ENCODE measurements at regions of chr7 and their contacts with region 1.

Region 1: DNA sequence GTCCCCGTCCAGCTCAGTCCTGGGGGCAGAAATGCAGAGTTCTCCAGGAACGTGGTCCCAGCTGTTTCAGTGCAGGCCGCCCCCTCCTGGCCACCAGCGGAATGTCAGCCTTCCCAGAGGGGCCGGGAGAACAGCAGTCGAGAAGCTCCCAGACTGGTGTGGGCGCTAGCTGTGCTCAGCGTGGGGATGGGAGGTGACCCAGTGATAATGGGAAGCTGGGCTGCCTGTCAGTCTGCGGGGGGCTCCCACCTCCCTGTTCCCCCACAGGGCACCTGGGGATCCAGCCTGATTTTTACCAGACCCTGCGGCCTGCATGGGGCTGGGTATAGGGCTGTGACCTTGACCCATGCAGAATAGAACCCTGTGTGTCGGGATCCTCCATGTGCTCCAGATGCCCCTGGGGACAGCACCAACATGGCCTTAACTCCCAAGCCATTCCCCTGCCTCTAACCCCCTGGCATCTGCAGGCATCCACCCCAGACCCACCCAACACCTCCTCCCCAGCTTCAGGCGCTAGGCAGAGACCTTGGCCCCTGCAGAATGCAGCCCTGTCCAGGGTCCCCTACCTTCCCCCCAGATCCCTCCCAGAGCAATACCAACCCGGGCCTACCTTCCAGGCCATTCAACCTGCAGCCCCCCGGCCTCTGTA is 946 bp upstream of the ELN start:
- DNase-seq: peak; percentile 83
- H3K4me3 ChIP-seq: no peak overlapping the region
- H3K27ac ChIP-seq: peak overlapping the region; percentile 37
- H3K4me1 ChIP-seq: no peaks in the 10 kb centered on the region
- H3K27me3 ChIP-seq: no peaks in the 10 kb centered on the region
- CTCF ChIP-seq: peak; percentile 95

Region 2: DNA sequence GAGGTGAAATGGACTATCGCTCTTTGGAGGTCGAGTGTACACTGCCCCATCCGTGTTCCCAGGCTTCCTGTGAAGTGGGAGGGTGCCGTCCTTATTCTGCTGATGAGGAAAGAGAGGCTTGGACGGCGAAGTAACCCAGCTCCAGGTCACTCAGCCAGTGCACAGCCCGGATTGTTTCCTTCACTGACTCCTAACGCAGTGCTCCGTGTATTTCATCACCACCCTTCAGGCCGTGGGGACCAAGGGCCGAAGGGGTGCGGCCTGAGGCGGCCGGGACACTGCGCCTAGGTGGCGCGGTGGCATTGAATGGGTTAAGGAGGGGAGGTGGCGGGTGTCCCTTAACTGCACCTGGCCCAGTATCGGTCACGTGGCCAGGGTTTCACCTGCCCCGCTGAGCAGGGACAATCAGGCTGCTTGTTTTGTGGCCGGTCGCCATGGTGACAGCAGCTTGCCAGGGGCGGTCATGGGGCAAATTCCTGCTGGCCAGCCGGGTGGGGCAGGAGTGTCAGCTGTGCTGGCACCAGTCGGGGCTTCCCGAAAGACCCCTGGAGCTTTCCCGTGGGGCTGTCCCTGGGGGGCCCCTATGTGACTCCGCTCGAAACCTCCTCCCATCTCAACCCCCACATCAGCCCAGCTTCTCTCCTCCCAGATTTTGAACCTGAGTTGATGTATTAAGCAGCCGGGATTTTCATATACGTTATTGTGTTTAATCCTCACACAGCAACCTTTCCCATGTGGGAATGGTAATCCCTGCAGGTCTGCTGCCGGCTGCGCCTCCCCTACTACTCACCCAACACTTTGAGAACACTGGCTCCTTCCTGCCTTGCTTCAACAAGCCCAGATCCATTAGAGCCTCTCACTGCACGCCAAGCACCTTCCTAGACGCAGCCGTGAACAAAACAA is 284.1 kb before region 1 on chr7:
- intact Hi-C with region 1: no loop called
- DNase-seq: peak; percentile 99
- H3K4me3 ChIP-seq: no peak overlapping the region
- H3K27ac ChIP-seq: peak overlapping the region; percentile 84
- H3K4me1 ChIP-seq: no peaks in the 10 kb centered on the region
- H3K27me3 ChIP-seq: no peaks in the 10 kb centered on the region
- CTCF ChIP-seq: no peak

Region 3: DNA sequence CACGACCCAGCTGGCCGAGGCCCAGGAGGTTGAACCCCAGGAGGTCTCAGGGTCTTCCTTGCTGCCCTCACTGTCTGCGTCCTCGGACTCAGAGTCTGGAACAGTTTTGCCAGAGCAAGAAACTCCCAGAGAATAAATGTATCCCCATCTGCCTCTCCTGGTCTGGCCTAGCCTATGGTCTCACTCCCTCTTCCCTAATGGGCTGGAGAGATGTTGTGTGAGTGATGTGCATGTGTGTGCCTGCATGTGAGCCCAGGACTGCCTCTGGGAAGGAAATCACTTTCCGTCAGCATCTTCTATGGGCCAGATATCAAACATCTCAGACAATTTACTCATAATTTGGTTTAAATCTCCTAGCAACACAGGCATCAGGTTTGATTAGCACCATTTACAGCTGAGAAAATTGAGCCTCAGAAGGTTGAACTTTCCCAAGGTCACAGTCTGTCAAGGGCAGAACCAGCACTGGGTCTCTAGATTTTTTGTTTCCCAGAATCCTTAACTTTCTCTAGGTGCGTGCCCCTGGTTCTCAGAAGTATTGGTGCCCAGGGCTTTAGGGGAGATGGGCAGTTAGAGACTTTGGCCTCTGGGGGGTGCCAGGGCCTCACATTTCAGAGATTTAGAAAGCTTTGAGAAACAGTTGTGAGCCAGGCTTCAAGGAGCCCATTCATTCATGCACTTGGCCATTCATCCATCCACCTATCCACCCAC is 161.1 kb before region 1 on chr7:
- intact Hi-C with region 1: loop called (anchors 5 kb)
- DNase-seq: no peak
- H3K4me3 ChIP-seq: no peak overlapping the region
- H3K27ac ChIP-seq: no peak overlapping the region
- H3K4me1 ChIP-seq: no peaks in the 10 kb centered on the region
- H3K27me3 ChIP-seq: no peaks in the 10 kb centered on the region
- CTCF ChIP-seq: peak; percentile 49

Region 4: DNA sequence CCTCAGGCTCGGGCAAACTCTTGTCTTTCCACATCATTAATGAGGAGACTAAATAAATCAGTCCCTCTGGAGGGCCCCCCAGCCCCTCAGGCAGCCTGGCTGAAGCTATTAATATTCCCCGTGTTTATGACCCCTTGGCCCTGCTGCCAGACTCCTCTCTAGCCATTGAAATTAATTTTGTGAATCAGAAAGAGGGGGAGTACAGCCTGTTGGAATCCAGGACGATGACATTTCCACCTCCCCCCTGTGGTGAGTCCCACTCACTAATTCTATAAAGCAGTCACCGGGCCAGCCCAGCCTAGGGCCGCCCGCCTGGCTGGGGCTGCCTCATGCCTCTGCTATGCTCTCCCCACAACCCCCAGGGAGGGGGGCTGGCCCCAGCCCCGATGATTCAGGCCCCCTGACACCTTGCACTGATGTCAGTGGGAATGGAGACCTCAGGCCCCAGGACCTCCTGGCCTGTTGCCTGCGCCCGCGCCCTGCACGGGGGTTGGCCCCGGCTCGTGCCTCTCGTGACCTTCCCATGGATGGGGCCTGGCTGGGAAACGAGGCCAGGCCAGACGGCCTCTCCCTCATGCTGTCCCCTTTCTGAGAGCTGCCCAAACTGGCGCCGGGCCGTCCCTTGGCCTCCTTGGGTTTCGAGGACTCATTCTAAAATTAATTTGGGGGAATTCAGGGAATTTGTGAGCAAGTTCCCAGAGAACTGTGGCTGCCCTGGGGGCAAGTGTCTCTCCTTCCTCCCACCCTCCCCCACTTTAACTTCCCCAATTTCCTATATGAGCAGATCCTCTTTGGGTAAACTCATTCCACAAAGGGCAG is 132.1 kb before region 1 on chr7:
- intact Hi-C with region 1: loop called (anchors 10 kb)
- DNase-seq: no peak
- H3K4me3 ChIP-seq: no peak overlapping the region
- H3K27ac ChIP-seq: no peak overlapping the region
- H3K4me1 ChIP-seq: no peaks in the 10 kb centered on the region
- H3K27me3 ChIP-seq: no peaks in the 10 kb centered on the region
- CTCF ChIP-seq: no peak

Region 5: GRCh38 chr7:74061840-74062539 is 35.0 kb after region 1 on chr7:
- intact Hi-C with region 1: no loop called
- DNase-seq: peak; percentile 90
- H3K4me3 ChIP-seq: peak overlapping the region; percentile 8
- H3K27ac ChIP-seq: peak overlapping the region; percentile 74
- H3K4me1 ChIP-seq: peaks cover 14% of the 10 kb centered on the region
- H3K27me3 ChIP-seq: no peaks in the 10 kb centered on the region
- CTCF ChIP-seq: no peak

Measured in colonic mucosa (tissue), 4 donors.